Caco-2 (cell line): ENCODE measurements at regions of chr4 and their contacts with region 1.

Region 1: GRCh38 chr4:140153718-140154571 is at the start of gene MAML3:
- DNase-seq: peak; percentile 95 to 96
- H3K4me3 ChIP-seq: peak within 1 kb of the TSS; percentile 91
- H3K4me3 Mint-ChIP-seq: peak within 1 kb of the TSS; percentile 97
- H3K27ac Mint-ChIP-seq: peak within 1 kb of the TSS; percentile 97
- H3K4me1 ChIP-seq: 0 out of 2 replicates have a peak, but pooled peaks cover 5% of the 10 kb centered on the region
- H3K4me1 Mint-ChIP-seq: no peaks in the 10 kb centered on the region
- H3K27me3 ChIP-seq: no peaks in the 10 kb centered on the region
- H3K27me3 Mint-ChIP-seq: no peaks in the 10 kb centered on the region
- CTCF ChIP-seq: no peak
- total RNA-seq, gene MAML3: 12.1 TPM in 2 replicates

Region 2: GRCh38 chr4:139734875-139735380 is 419.0 kb before region 1 on chr4:
- CTCF ChIA-PET with region 1: no interaction called
- POLR2A ChIA-PET with region 1: no interaction called
- intact Hi-C with region 1: loop called (anchors 1 kb)
- DNase-seq: peak; percentile 82 to 89
- H3K4me3 ChIP-seq: peak overlapping the region; percentile 29
- H3K4me3 Mint-ChIP-seq: peak overlapping the region; percentile 69
- H3K27ac Mint-ChIP-seq: peak overlapping the region; percentile 78
- H3K4me1 ChIP-seq: peaks cover 39% of the 10 kb centered on the region
- H3K4me1 Mint-ChIP-seq: peaks cover 22% of the 10 kb centered on the region
- H3K27me3 ChIP-seq: no peaks in the 10 kb centered on the region
- H3K27me3 Mint-ChIP-seq: no peaks in the 10 kb centered on the region
- CTCF ChIP-seq: peak; percentile 76 to 82

Region 3: DNA sequence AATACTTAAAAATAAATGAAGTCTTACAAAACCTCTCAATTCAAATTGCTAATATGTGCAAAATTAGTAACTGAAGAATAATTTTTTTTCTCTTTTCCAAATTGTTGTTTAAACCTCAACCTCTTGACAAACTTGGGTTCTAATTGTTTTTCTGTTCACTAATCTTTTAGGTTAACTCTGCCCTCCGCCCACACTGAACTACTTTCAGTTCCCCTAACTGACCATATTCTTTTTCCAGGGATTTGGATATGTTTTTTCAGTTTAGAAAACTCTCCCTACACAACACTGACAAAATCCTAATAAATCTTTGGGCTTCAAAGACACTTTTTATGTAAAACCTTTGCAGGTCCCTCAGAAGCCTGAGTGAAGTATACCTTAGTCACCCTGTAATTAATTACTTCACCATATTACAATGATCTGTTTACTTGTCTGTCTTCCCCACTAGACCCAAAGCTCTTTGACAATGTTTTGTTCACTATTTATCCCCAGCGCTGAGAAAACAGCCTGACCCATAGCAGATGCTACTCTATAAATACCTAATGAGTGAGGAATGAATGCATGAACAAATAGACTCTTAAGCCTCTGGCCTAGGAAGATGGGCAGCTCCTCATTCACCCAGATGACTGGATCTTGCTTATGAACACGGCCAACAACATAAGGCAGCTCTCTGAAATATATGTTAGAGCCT is 134.9 kb before region 1 on chr4:
- CTCF ChIA-PET with region 1: interaction called, 3 read pairs
- POLR2A ChIA-PET with region 1: interaction called, 8 read pairs
- intact Hi-C with region 1: loop called (anchors 1 kb)
- DNase-seq: peak; percentile 44 to 52
- H3K4me3 ChIP-seq: no peak overlapping the region
- H3K4me3 Mint-ChIP-seq: peak overlapping the region; percentile 60
- H3K27ac Mint-ChIP-seq: peak overlapping the region; percentile 66
- H3K4me1 ChIP-seq: peaks cover 50% of the 10 kb centered on the region
- H3K4me1 Mint-ChIP-seq: peaks cover 54% of the 10 kb centered on the region
- H3K27me3 ChIP-seq: no peaks in the 10 kb centered on the region
- H3K27me3 Mint-ChIP-seq: no peaks in the 10 kb centered on the region
- CTCF ChIP-seq: no peak

Region 4: GRCh38 chr4:140085062-140085622 is 68.8 kb before region 1 on chr4:
- CTCF ChIA-PET with region 1: no interaction called
- POLR2A ChIA-PET with region 1: interaction called, 9 read pairs
- intact Hi-C with region 1: loop called (anchors 2 kb)
- DNase-seq: peak; percentile 70 to 75
- H3K4me3 ChIP-seq: no peak overlapping the region
- H3K4me3 Mint-ChIP-seq: peak overlapping the region; percentile 56
- H3K27ac Mint-ChIP-seq: peak overlapping the region; percentile 82
- H3K4me1 ChIP-seq: peaks cover 61% of the 10 kb centered on the region
- H3K4me1 Mint-ChIP-seq: peaks cover 69% of the 10 kb centered on the region
- H3K27me3 ChIP-seq: no peaks in the 10 kb centered on the region
- H3K27me3 Mint-ChIP-seq: no peaks in the 10 kb centered on the region
- CTCF ChIP-seq: no peak

Region 5: GRCh38 chr4:140135529-140136088 is 18.3 kb before region 1 on chr4:
- CTCF ChIA-PET with region 1: no interaction called
- POLR2A ChIA-PET with region 1: interaction called, 26 read pairs
- intact Hi-C with region 1: loop called (anchors 1 kb)
- DNase-seq: no peak
- H3K4me3 ChIP-seq: no peak overlapping the region
- H3K4me3 Mint-ChIP-seq: no peak overlapping the region
- H3K27ac Mint-ChIP-seq: peak overlapping the region; percentile 88
- H3K4me1 ChIP-seq: peaks cover 70% of the 10 kb centered on the region
- H3K4me1 Mint-ChIP-seq: peaks cover 25% of the 10 kb centered on the region
- H3K27me3 ChIP-seq: no peaks in the 10 kb centered on the region
- H3K27me3 Mint-ChIP-seq: no peaks in the 10 kb centered on the region
- CTCF ChIP-seq: no peak